ENCODE measurements at regions of chr2 and their contacts with region 1.

Region 1: DNA sequence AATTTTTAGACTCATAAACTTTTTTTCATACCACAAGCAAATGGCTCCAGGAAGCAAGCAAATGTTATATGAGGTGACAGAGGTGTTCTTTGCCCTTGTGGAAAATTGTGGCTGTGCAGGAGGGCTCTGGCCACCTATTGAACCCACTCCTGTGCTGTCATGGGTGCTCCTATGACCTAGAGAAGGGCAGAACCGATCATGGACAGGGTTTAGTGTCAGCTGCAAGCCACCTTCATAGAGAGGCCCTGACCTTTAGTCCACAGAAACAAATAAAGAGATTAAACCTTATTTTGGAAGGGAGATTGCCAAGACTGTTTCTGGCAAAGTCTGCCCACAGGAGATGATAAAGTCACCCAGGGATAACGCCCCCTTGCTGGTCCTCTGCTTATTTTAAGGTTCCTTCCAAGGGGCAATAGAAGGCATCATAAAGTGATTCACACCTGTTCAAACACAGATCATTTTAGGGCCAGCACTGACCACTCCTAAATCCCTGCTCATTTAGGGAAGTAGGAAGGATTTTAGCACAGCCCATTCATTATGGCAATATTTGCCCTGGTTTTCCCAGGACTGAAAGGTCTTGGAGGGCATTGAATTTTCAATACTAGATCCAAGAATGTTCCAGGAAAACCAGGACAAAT is 26.1 kb upstream of the STAT4 start:
- DNase-seq: no peak
- H3K4me3 Mint-ChIP-seq: no peak overlapping the region
- H3K27ac Mint-ChIP-seq: no peak overlapping the region
- H3K4me1 Mint-ChIP-seq: peaks cover 23% of the 10 kb centered on the region
- H3K27me3 Mint-ChIP-seq: peaks cover 3% of the 10 kb centered on the region

Region 2: GRCh38 chr2:191165176-191165643 is 11.7 kb before region 1 on chr2:
- CTCF ChIA-PET with region 1: interaction called, 13 read pairs
- DNase-seq: peak; percentile 24
- H3K4me3 Mint-ChIP-seq: no peak overlapping the region
- H3K27ac Mint-ChIP-seq: no peak overlapping the region
- H3K4me1 Mint-ChIP-seq: peaks cover 12% of the 10 kb centered on the region
- H3K27me3 Mint-ChIP-seq: peaks cover 10% of the 10 kb centered on the region

Region 3: DNA sequence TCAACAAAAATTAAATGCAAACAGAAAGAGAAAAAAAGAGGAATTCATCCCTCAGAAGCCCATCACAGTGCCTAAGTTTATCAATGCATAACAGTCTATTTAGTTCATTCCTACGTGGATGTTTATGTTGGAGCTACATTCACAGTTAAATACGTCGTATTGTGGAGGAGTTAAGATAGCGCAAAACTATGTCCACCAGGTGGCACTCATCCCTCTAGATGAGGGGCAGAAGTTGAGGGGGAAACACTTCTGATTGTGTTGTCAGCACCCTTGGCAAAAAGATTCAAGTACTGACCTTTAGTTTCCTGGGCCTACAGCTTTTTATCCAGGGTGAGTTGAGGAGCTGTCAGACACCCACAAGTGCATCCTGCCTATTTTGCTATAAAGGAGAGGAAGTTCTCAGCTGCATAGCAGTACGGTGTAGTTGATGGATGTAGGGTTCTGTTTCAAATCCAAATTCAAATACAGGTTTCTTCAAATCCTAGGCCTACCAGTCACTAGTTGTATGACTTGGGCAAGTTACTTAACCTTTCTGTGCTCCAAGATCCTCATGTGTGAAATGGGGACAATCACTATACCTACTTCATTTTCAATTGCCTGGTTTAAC is 41.5 kb after region 1 on chr2:
- CTCF ChIA-PET with region 1: interaction called, 11 read pairs
- DNase-seq: peak; percentile 38
- H3K4me3 Mint-ChIP-seq: no peak overlapping the region
- H3K27ac Mint-ChIP-seq: no peak overlapping the region
- H3K4me1 Mint-ChIP-seq: peaks cover 11% of the 10 kb centered on the region
- H3K27me3 Mint-ChIP-seq: no peaks in the 10 kb centered on the region

Region 4: GRCh38 chr2:191304939-191305875 is 128.3 kb after region 1 on chr2:
- CTCF ChIA-PET with region 1: no interaction called
- DNase-seq: no peak
- H3K4me3 Mint-ChIP-seq: no peak overlapping the region
- H3K27ac Mint-ChIP-seq: no peak overlapping the region
- H3K4me1 Mint-ChIP-seq: no peaks in the 10 kb centered on the region
- H3K27me3 Mint-ChIP-seq: no peaks in the 10 kb centered on the region